A673 (cell line): ENCODE measurements at regions of chr13 and their contacts with region 1.

Region 1: DNA sequence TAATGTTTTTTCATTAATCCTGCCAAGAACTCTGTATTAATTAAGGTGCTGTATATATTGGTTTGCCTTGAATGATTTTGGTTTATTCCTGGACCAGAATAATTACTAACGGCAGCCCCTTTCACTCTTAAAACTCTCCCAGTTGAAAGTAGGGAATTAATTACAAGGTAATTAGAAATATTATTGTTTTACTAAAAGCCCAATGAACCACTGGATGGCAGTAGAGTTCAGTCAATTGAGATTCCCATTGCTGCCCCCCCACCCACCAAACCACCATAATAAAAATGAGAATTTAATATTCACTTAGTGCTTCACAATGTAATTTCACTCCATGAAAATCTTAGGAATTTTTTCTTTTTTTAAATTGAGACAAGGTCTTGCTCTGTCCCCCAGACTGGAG is 13.7 kb downstream of the WBP4 start:
- DNase-seq: peak; percentile 40
- H3K4me3 ChIP-seq: no peak overlapping the region
- H3K27ac ChIP-seq: no peak overlapping the region
- H3K4me1 ChIP-seq: no peaks in the 10 kb centered on the region
- H3K27me3 ChIP-seq: no peaks in the 10 kb centered on the region
- CTCF ChIP-seq: peak; percentile 59

Region 2: GRCh38 chr13:41085961-41086585 is 11.0 kb after region 1 on chr13:
- CTCF ChIA-PET with region 1: interaction called, 5 read pairs
- POLR2A ChIA-PET with region 1: interaction called, 16 read pairs
- intact Hi-C with region 1: no loop called
- DNase-seq: peak; percentile 13
- H3K4me3 ChIP-seq: no peak overlapping the region
- H3K27ac ChIP-seq: no peak overlapping the region
- H3K4me1 ChIP-seq: no peaks in the 10 kb centered on the region
- H3K27me3 ChIP-seq: no peaks in the 10 kb centered on the region
- CTCF ChIP-seq: no peak

Region 3: DNA sequence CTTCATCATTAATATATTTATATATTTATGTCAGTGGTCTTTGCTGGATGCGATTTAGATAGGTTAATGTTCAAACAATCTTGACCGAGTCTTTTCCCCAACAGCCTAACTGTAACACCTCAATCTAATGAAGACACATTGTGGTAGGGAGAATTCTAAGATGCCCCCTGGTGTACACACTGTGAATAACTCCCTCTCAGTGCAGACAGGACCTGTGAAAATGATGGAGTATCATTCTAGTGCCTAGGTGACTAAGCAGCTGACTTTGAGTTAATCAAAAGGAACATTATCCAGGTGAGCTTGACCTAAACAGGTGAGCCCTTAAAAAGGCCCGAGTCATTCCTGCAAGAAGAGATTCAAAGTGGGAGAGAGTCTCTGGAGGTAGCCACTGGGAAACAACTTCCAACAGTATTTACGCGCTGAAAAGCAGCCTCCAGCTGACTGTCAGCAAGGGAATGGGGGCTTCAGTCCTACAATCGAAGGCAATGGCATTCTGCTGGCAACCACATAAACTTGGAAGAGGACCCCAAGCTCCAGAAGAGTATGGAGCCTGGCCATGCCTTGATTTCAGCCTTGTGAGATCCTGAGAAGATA is 147.3 kb after region 1 on chr13:
- CTCF ChIA-PET with region 1: no interaction called
- POLR2A ChIA-PET with region 1: no interaction called
- intact Hi-C with region 1: loop called (anchors 2 kb)
- DNase-seq: peak; percentile 66
- H3K4me3 ChIP-seq: no peak overlapping the region
- H3K27ac ChIP-seq: no peak overlapping the region
- H3K4me1 ChIP-seq: no peaks in the 10 kb centered on the region
- H3K27me3 ChIP-seq: no peaks in the 10 kb centered on the region
- CTCF ChIP-seq: peak; percentile 84